ENCODE measurements at regions of chr11 and their contacts with region 1.

Region 1: DNA sequence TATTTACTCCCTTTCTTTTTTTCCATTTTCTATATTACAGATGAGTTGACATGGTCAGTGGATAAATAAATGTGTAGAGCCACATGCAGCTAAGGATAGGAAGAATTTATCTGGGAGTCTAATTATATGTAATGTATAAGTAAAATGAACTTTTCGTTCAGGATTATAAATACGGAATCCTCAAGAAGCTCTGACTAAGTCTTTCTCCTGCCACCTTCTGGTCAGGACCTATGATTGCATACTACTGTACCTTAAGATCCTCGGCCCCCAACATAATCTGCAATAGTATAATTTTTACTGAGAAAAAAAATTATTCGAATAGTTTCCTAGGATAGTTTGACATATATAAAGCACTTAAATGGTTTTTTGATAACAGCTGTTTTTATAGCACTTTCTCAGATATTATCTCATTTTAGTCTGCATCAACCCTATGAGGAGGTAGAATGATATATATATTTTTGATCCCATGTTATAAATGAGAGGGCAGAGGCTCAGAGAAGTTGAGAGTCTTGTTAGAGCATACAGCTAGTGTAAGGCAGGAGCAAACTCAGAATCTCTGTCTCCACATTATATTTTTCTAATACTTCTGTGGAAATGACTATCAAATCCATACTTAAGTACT is 36.1 kb downstream of the CCDC90B start:
- DNase-seq: no peak
- H3K4me3 Mint-ChIP-seq: no peak overlapping the region
- H3K27ac Mint-ChIP-seq: no peak overlapping the region
- H3K4me1 Mint-ChIP-seq: peaks cover 2% of the 10 kb centered on the region
- H3K27me3 Mint-ChIP-seq: no peaks in the 10 kb centered on the region

Region 2: GRCh38 chr11:82906244-82906654 is 343.8 kb before region 1 on chr11:
- intact Hi-C with region 1: loop called (anchors 1 kb)
- DNase-seq: no peak
- H3K4me3 Mint-ChIP-seq: no peak overlapping the region
- H3K27ac Mint-ChIP-seq: no peak overlapping the region
- H3K4me1 Mint-ChIP-seq: peaks cover 51% of the 10 kb centered on the region
- H3K27me3 Mint-ChIP-seq: no peaks in the 10 kb centered on the region

Region 3: GRCh38 chr11:83044958-83045712 is 204.9 kb before region 1 on chr11:
- intact Hi-C with region 1: no loop called
- DNase-seq: no peak
- H3K4me3 Mint-ChIP-seq: no peak overlapping the region
- H3K27ac Mint-ChIP-seq: no peak overlapping the region
- H3K4me1 Mint-ChIP-seq: peaks cover 21% of the 10 kb centered on the region
- H3K27me3 Mint-ChIP-seq: no peaks in the 10 kb centered on the region

Region 4: GRCh38 chr11:83087035-83087434 is 163.0 kb before region 1 on chr11:
- intact Hi-C with region 1: loop called (anchors 10 kb)
- DNase-seq: no peak
- H3K4me3 Mint-ChIP-seq: no peak overlapping the region
- H3K27ac Mint-ChIP-seq: no peak overlapping the region
- H3K4me1 Mint-ChIP-seq: peaks cover 9% of the 10 kb centered on the region
- H3K27me3 Mint-ChIP-seq: no peaks in the 10 kb centered on the region

Region 5: GRCh38 chr11:83174008-83174407 is 76.1 kb before region 1 on chr11:
- intact Hi-C with region 1: no loop called
- DNase-seq: no peak
- H3K4me3 Mint-ChIP-seq: no peak overlapping the region
- H3K27ac Mint-ChIP-seq: no peak overlapping the region
- H3K4me1 Mint-ChIP-seq: peaks cover 48% of the 10 kb centered on the region
- H3K27me3 Mint-ChIP-seq: no peaks in the 10 kb centered on the region

Region 6: DNA sequence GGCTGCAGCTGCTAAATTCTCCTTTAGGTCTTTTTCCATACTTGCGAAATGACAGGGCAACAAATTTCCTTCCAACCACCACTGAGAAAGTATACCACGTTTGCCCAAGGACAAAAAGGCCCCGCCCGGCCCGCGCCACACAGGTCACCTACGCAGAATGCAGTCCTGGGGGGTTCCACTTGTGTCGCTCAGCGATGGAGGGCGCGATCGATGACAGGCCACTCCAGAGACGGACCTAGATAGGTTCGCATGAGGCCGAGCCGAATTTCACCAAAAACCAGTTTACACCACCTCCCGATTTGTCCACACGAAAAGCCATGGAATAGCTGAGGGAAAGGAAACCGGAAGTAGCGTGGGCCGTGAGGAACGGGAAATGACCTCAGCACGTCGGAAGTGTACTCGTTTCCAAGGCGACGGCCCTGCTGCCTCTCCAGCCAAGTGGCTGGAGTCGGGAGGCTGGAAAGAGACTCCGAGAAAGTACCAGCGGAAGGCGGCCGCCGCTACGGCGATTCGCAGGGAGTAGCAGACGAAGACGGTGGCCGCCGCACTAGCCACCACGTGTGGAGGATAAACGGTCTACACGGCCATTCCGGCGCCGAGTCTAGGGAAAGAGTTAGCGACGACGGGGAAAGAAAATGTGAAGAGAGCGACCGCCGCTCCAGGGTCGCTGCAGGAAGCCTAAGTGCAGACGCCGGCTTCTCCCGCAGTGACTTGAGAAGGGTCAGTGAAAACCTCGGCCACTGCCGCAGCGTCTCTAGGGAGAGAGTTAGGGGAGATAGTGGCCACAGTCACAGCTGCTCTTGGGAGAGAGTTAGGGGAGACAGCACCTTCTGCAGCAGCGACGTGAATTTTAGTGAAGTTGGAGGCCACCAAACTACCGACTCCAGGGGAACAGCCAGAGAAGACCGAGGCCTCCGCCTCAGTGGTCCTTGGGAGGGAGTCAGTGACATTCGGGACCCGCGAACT is 56.5 kb before region 1 on chr11 and contains the start of gene ANKRD42:
- intact Hi-C with region 1: loop called (anchors 2 kb)
- DNase-seq: peak; percentile 82
- H3K4me3 Mint-ChIP-seq: peak within 1 kb of the TSS; percentile 99
- H3K27ac Mint-ChIP-seq: peak within 1 kb of the TSS; percentile 92
- H3K4me1 Mint-ChIP-seq: peaks cover 21% of the 10 kb centered on the region
- H3K27me3 Mint-ChIP-seq: no peaks in the 10 kb centered on the region
- total RNA-seq, gene ANKRD42: 3.7 TPM in 2 replicates

Region 7: GRCh38 chr11:83235825-83236224 is 14.3 kb before region 1 on chr11:
- intact Hi-C with region 1: no loop called
- DNase-seq: no peak
- H3K4me3 Mint-ChIP-seq: no peak overlapping the region
- H3K27ac Mint-ChIP-seq: no peak overlapping the region
- H3K4me1 Mint-ChIP-seq: no peaks in the 10 kb centered on the region
- H3K27me3 Mint-ChIP-seq: peaks cover 13% of the 10 kb centered on the region